ENCODE measurements at regions of chr7 and their contacts with region 1.

Region 1: GRCh38 chr7:30938435-30939316 is 25.1 kb upstream of the GHRHR start:
- DNase-seq: peak; percentile 54
- H3K4me3 Mint-ChIP-seq: no peak overlapping the region
- H3K27ac Mint-ChIP-seq: no peak overlapping the region
- H3K4me1 Mint-ChIP-seq: no peaks in the 10 kb centered on the region
- H3K27me3 Mint-ChIP-seq: peaks cover 34% of the 10 kb centered on the region

Region 2: DNA sequence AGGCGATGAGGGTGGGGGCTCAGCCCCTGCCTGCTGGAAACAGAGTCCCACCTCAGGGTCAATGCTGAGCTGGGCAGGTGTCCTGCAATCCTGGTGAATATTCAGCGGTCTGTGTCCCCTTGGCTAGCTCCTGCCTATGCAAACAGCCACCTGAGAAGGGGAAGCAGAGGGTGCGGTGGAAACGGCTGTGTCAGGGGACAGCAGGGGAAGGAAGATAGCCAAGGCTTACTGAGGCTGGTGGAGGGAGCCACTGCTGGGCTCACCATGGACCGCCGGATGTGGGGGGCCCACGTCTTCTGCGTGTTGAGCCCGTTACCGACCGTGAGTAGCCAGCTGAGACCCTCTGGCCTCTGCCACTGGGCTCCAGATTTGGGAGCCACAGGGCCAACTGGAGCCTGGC is 25.1 kb after region 1 on chr7 and contains the start of gene GHRHR:
- intact Hi-C with region 1: no loop called
- DNase-seq: no peak
- H3K4me3 Mint-ChIP-seq: no peak within 1 kb of the TSS
- H3K27ac Mint-ChIP-seq: no peak within 1 kb of the TSS
- H3K4me1 Mint-ChIP-seq: no peaks in the 10 kb centered on the region
- H3K27me3 Mint-ChIP-seq: peaks cover 7% of the 10 kb centered on the region
- total RNA-seq, gene GHRHR: not detected in 2 replicates

Region 3: DNA sequence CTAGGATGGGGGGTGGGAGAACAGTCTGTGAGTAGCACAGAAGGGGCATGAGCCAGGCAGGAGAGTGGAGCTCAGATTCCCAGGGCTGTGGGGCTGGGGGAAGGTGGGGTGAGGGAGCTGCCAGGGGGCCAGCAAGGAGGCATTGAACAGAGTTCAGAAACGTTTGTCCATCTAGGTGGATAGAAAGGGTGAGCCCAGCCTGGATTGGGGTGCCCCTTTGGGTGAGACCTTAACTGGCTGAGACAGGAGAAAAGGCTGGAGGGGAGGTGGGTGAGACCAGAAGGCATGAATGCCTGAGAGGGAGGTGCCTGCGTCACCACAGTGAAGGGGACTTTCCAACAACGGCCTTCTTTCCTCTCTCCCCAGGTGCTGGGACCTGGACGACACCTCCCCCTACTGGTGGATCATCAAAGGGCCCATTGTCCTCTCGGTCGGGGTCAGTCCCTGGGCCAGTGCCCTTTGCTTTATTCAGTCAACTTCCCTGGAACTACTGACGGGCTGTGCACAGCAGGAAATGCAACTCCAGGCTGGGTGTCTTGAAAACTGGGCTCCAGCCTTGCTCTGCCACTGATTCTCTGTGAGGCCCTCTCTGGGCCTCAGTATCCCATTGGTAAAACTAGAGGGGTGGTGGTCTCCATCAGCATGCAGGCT is 36.1 kb after region 1 on chr7:
- intact Hi-C with region 1: loop called (anchors 1 kb)
- DNase-seq: peak; percentile 40
- H3K4me3 Mint-ChIP-seq: no peak overlapping the region
- H3K27ac Mint-ChIP-seq: peak overlapping the region; percentile 56
- H3K4me1 Mint-ChIP-seq: peaks cover 7% of the 10 kb centered on the region
- H3K27me3 Mint-ChIP-seq: peaks cover 9% of the 10 kb centered on the region

Region 4: GRCh38 chr7:31864646-31865045 is 926.0 kb after region 1 on chr7:
- intact Hi-C with region 1: no loop called
- DNase-seq: no peak
- H3K4me3 Mint-ChIP-seq: no peak overlapping the region
- H3K27ac Mint-ChIP-seq: no peak overlapping the region
- H3K4me1 Mint-ChIP-seq: no peaks in the 10 kb centered on the region
- H3K27me3 Mint-ChIP-seq: no peaks in the 10 kb centered on the region

Measured in activated T-helper 2 cell treated with anti-CD3 and anti-CD28 coated beads, Interferon-gamma antibody, Interleukin-2, Interleukin-4, amounts not matched to agents 10 μg/mL and 5 μg/mL and 100 μg/mL, durations not matched to agents 14 hours and 24 hours and 36 hours (primary cell).